A549 (cell line): ENCODE measurements at regions of chr1 and their contacts with region 1.

Region 1: DNA sequence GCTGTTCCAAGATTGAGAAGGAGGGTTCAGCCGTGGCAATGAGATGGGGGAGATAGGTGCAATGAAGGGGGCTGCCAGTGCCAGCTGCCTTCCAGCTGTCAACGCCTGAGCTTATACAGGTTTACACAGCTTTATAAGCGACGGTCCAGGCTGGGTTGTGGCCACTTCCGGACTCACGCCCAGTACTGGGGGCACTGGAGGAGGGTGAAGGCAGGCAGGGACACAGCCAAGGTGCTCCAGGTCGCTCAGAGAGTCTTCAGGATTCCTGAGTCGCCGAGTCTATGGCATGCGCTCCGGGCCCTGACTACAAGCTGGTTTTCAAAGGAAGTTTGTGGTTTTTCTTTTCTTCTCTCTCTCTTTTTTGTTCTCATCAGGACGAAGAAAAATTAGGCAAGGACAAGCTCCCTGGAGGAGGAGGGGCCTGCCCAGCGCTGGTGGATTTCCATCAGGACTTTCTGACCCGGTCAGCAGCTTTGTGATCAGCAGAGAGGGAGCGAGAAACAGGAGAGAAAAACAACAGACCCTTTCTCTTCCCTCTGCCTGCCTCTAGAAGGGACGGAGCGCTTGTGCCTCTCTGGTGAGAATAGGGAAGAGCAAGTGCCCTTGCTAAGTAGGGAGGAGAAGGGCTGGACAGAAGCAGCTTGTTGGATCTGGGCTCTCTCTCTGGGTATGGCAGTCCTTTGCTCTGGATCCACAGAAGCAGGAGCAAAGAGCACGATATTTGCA is at the start of gene MINDY1:
- DNase-seq: peak; percentile 85 to 95
- ATAC-seq: peak; percentile 91 to 92
- H3K4me3 ChIP-seq: peak within 1 kb of the TSS; percentile 88
- H3K27ac ChIP-seq: peak within 1 kb of the TSS; percentile 77 to 95
- H3K4me1 ChIP-seq: peaks cover 36% of the 10 kb centered on the region
- CTCF ChIP-seq: peak; percentile 35; the same call in 2 of the 3 replicates
- EP300 ChIP-seq: no peak
- POLR2A ChIP-seq: no peak; the same call in none of the 2 replicates
- RAD21 ChIP-seq: peak; percentile 43 to 54; a peak in 4 of 5 replicates
- polyA plus RNA-seq, gene MINDY1: 5.2 and 7.9 TPM in 2 replicates

Region 2: GRCh38 chr1:150970808-150971592 is 35.5 kb before region 1 on chr1:
- CTCF ChIA-PET with region 1: interaction called, 586 read pairs
- POLR2A ChIA-PET with region 1: interaction called, 3 read pairs
- DNase-seq: no peak
- ATAC-seq: peak in 1 of 2 experiments; percentile 17; a peak in 3 of 6 replicates
- H3K4me3 ChIP-seq: peak overlapping the region; percentile 90
- H3K27ac ChIP-seq: peak overlapping the region; percentile 98 to 100
- H3K4me1 ChIP-seq: peaks cover 49% of the 10 kb centered on the region
- CTCF ChIP-seq: no peak
- EP300 ChIP-seq: no peak
- POLR2A ChIP-seq: no peak
- RAD21 ChIP-seq: no peak

Region 3: DNA sequence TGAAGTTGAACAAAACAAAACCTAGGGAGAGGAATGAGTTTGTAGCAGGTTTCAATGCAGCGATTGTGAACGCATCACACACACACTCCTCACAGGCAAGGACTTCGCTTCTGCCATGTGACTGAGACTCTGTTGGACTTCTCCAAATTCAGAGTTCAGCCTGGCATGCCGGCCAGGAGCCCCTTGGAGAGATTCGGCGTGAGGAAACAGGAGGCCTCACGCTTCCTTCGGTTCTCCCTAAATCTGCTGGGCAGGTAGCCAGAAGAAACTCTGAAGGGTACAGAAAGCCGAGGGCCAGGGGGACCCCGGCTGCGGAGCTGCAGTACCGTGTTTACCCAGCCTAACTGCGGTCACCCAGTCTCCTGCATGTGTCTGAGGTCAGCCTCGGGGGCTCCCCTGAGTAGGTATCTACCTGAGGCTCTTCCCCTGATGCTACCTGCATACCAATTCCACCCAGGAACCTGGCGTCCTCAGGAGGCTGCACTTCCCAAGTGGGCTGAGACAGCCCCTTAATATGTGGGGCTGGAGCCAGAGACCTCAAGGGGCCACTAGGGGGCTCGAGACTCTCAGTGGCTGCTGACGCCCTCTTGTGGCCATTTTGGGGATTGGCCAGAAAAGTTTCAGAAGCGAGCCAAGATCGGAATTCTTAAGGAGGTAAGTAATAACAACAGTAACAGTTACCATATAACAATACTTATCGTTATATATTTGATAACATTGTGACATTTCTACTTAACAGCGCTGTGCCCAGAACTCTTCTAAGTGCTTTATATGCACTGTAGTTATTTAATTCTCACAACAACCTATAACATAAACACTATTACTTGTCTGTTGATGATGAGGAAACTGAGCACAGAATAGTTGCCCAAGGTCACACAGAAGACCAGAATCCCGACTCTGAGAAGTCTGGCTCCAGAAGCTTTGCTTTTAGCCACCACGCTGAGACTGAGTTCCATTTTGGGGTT is 27.1 kb before region 1 on chr1:
- CTCF ChIA-PET with region 1: interaction called, 586 read pairs
- POLR2A ChIA-PET with region 1: interaction called, 3 read pairs
- DNase-seq: peak; percentile 89 to 93
- ATAC-seq: peak; percentile 47 to 73
- H3K4me3 ChIP-seq: no peak overlapping the region
- H3K27ac ChIP-seq: peak overlapping the region; percentile 68 to 100
- H3K4me1 ChIP-seq: peaks cover 61% of the 10 kb centered on the region
- CTCF ChIP-seq: peak; percentile 100
- EP300 ChIP-seq: no peak
- POLR2A ChIP-seq: no peak
- RAD21 ChIP-seq: peak; percentile 87 to 89

Region 4: GRCh38 chr1:151059078-151059907 is 52.8 kb after region 1 on chr1 and contains the start of gene CDC42SE1:
- CTCF ChIA-PET with region 1: interaction called, 19 read pairs
- POLR2A ChIA-PET with region 1: no interaction called
- DNase-seq: peak; percentile 88 to 94
- ATAC-seq: peak; percentile 90 to 93
- H3K4me3 ChIP-seq: peak within 1 kb of the TSS; percentile 90
- H3K27ac ChIP-seq: peak within 1 kb of the TSS; percentile 98 to 100
- H3K4me1 ChIP-seq: peaks cover 49% of the 10 kb centered on the region
- CTCF ChIP-seq: peak; percentile 42; the same call in 2 of the 3 replicates
- EP300 ChIP-seq: no peak
- POLR2A ChIP-seq: peak; percentile 68
- RAD21 ChIP-seq: peak in 1 of 2 experiments; percentile 27; a peak in 3 of 5 replicates
- polyA plus RNA-seq, gene CDC42SE1: 78.1 and 83.1 TPM in 2 replicates

Region 5: DNA sequence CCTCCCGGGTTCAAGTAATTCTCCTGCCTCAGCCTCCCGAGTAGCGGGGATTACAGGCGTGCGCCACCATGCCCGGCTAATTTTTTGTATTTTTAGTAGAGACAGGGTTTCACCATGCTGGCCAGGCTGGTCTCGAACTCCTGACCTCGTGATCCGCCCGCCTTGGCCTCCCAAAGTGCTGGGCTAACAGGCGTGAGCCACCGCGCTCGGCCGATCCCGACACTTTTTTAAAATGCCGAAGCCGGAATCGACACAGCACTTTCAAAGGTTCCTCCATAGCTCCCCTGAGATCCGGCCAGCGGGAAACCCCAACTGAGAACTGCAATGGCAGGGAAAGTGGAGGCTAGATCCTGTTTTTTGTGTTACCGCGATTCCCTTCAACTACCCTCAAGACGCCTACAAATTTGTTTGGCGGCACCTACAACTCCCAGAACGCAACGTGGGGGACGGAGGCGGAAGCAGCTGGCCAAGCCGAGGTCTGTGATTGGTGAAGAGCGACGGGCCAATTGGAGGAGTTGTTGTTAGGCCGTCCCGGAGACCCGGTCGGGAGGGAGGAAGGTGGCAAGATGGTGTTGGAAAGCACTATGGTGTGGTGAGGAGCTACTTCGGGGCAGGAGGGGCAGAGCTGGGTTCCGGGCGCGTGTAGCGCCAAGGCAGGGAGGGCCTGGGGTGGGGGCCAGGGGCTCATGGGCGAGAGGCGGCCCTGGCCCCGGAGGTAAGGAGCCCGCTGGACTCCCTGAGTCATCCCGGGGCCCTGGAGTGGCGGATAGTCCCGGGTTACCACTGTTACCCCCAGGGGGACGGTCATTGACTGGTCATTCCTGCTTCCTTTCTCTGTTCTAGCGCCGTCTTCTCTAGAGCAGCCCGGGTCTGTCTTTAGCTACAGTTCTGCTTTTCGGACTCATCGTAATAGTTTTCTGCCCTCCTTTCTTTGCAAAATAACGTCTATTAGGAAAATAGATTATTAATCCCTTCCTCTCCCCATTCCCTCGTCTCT is 248.0 kb after region 1 on chr1 and contains the start of gene PSMD4:
- CTCF ChIA-PET with region 1: no interaction called
- POLR2A ChIA-PET with region 1: no interaction called
- DNase-seq: peak; percentile 99
- ATAC-seq: peak; percentile 96 to 99
- H3K4me3 ChIP-seq: peak within 1 kb of the TSS; percentile 77
- H3K27ac ChIP-seq: peak within 1 kb of the TSS; percentile 93 to 95
- H3K4me1 ChIP-seq: peaks cover 6% of the 10 kb centered on the region; the same call in 1 of the 3 replicates
- CTCF ChIP-seq: no peak
- EP300 ChIP-seq: no peak
- POLR2A ChIP-seq: peak; percentile 92
- RAD21 ChIP-seq: no peak
- polyA plus RNA-seq, gene PSMD4: 241 and 265 TPM in 2 replicates